B cell (primary cell): ENCODE measurements at regions of chr4 and their contacts with region 1.

Region 1: GRCh38 chr4:81505004-81505598 is 33.4 kb upstream of the RASGEF1B start:
- DNase-seq: peak; percentile 85
- ATAC-seq: peak; percentile 69
- H3K4me3 ChIP-seq: peak overlapping the region in 3 of 5 experiments; percentile 6 to 33 (median 28)
- H3K4me3 Mint-ChIP-seq: peak overlapping the region; percentile 81
- H3K27ac ChIP-seq: peak overlapping the region; percentile 56 to 81
- H3K27ac Mint-ChIP-seq: peak overlapping the region; percentile 88
- H3K4me1 ChIP-seq: peaks cover 45 to 58% of the 10 kb centered on the region in 2 donors
- H3K4me1 Mint-ChIP-seq: peaks cover 70% of the 10 kb centered on the region
- H3K27me3 ChIP-seq: no peaks in the 10 kb centered on the region
- H3K27me3 Mint-ChIP-seq: no peaks in the 10 kb centered on the region
- CTCF ChIP-seq: no peak

Region 2: GRCh38 chr4:81069706-81070331 is 435.3 kb before region 1 on chr4:
- CTCF ChIA-PET with region 1: no interaction called
- POLR2A ChIA-PET with region 1: no interaction called
- intact Hi-C with region 1: no loop called
- DNase-seq: peak; percentile 77
- ATAC-seq: peak; percentile 61
- H3K4me3 ChIP-seq: no peak overlapping the region
- H3K4me3 Mint-ChIP-seq: no peak overlapping the region
- H3K27ac ChIP-seq: no peak overlapping the region
- H3K27ac Mint-ChIP-seq: no peak overlapping the region
- H3K4me1 ChIP-seq: no peaks in the 10 kb centered on the region
- H3K4me1 Mint-ChIP-seq: peaks cover 2% of the 10 kb centered on the region
- H3K27me3 ChIP-seq: no peaks in the 10 kb centered on the region
- H3K27me3 Mint-ChIP-seq: peaks cover 10% of the 10 kb centered on the region
- CTCF ChIP-seq: peak; percentile 98

Region 3: GRCh38 chr4:81494031-81494431 is 11.1 kb before region 1 on chr4:
- CTCF ChIA-PET with region 1: interaction called, 4 read pairs
- POLR2A ChIA-PET with region 1: interaction called, 4 read pairs
- intact Hi-C with region 1: loop called (anchors 1 kb)
- DNase-seq: peak; percentile 76
- ATAC-seq: peak; percentile 37
- H3K4me3 ChIP-seq: peak overlapping the region in 2 of 5 experiments; percentile 1 to 50
- H3K4me3 Mint-ChIP-seq: peak overlapping the region; percentile 76
- H3K27ac ChIP-seq: peak overlapping the region; percentile 59 to 80
- H3K27ac Mint-ChIP-seq: peak overlapping the region; percentile 85
- H3K4me1 ChIP-seq: peaks cover 43 to 54% of the 10 kb centered on the region in 2 donors
- H3K4me1 Mint-ChIP-seq: peaks cover 49% of the 10 kb centered on the region
- H3K27me3 ChIP-seq: no peaks in the 10 kb centered on the region
- H3K27me3 Mint-ChIP-seq: no peaks in the 10 kb centered on the region
- CTCF ChIP-seq: no peak

Region 4: GRCh38 chr4:81740487-81740886 is 235.4 kb after region 1 on chr4:
- CTCF ChIA-PET with region 1: no interaction called
- POLR2A ChIA-PET with region 1: no interaction called
- intact Hi-C with region 1: no loop called
- DNase-seq: no peak
- ATAC-seq: no peak
- H3K4me3 ChIP-seq: no peak overlapping the region
- H3K4me3 Mint-ChIP-seq: no peak overlapping the region
- H3K27ac ChIP-seq: no peak overlapping the region
- H3K27ac Mint-ChIP-seq: peak overlapping the region; percentile 6
- H3K4me1 ChIP-seq: peaks cover 6 to 9% of the 10 kb centered on the region in 2 donors
- H3K4me1 Mint-ChIP-seq: peaks cover 10% of the 10 kb centered on the region
- H3K27me3 ChIP-seq: no peaks in the 10 kb centered on the region
- H3K27me3 Mint-ChIP-seq: no peaks in the 10 kb centered on the region
- CTCF ChIP-seq: no peak